Pancreas (tissue), 10 donors: ENCODE measurements at regions of chr14 and their contacts with region 1.

Region 1: GRCh38 chr14:76386915-76387782 is 11.2 kb downstream of the ESRRB start:
- DNase-seq: peak; percentile 39 to 90 (median 78)
- ATAC-seq: peak; percentile 89 to 100 (median 98)
- H3K4me3 ChIP-seq: no peak overlapping the region
- H3K27ac ChIP-seq: no peak overlapping the region
- H3K4me1 ChIP-seq: no peaks in the 10 kb centered on the region
- H3K27me3 ChIP-seq: no peaks in the 10 kb centered on the region
- CTCF ChIP-seq: peak; percentile 94 to 99 (median 96)

Region 2: DNA sequence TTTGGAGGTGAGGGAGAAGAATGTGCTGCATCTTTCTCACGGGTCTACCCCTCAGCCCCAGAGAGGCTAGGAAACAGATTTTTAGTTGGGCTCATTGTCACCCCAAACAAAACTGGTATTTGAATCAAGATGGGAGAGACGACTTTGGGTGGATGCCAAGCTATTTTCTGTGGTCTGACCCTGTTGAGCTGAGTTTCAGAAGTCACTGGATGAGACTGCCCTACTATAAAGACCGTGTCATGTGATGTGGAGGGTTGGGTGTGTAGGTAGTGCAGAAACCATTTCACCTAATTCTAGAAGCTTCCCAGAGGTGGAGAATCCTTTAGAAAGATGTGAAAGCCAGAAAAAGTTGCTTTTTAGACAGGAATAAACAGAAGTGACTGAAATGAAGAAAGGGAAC is 341.4 kb before region 1 on chr14:
- intact Hi-C with region 1: loop called in 1 of 3 experiments (anchors 10 kb)
- DNase-seq: no peak
- ATAC-seq: no peak
- H3K4me3 ChIP-seq: no peak overlapping the region
- H3K27ac ChIP-seq: no peak overlapping the region
- H3K4me1 ChIP-seq: no peaks in the 10 kb centered on the region
- H3K27me3 ChIP-seq: no peaks in the 10 kb centered on the region
- CTCF ChIP-seq: no peak

Region 3: GRCh38 chr14:76687611-76688382 is 300.6 kb after region 1 on chr14:
- intact Hi-C with region 1: no loop called
- DNase-seq: peak; percentile 47 to 80 (median 72)
- ATAC-seq: peak; percentile 67 to 95 (median 85)
- H3K4me3 ChIP-seq: no peak overlapping the region
- H3K27ac ChIP-seq: no peak overlapping the region
- H3K4me1 ChIP-seq: no peaks in the 10 kb centered on the region
- H3K27me3 ChIP-seq: no peaks in the 10 kb centered on the region
- CTCF ChIP-seq: no peak

Region 4: GRCh38 chr14:76767681-76768656 is 380.8 kb after region 1 on chr14:
- intact Hi-C with region 1: no loop called
- DNase-seq: peak in 2 of 6 donors; percentile 60
- ATAC-seq: peak in 3 of 4 donors; percentile 60 to 74 (median 73)
- H3K4me3 ChIP-seq: no peak overlapping the region
- H3K27ac ChIP-seq: peak overlapping the region in 2 of 4 donors; percentile 14 to 46
- H3K4me1 ChIP-seq: peaks cover 0 to 2% (median 0%) of the 10 kb centered on the region in 3 donors
- H3K27me3 ChIP-seq: no peaks in the 10 kb centered on the region
- CTCF ChIP-seq: no peak